HEK293 (cell line): ENCODE measurements at regions of chr18 and their contacts with region 1.

Region 1: DNA sequence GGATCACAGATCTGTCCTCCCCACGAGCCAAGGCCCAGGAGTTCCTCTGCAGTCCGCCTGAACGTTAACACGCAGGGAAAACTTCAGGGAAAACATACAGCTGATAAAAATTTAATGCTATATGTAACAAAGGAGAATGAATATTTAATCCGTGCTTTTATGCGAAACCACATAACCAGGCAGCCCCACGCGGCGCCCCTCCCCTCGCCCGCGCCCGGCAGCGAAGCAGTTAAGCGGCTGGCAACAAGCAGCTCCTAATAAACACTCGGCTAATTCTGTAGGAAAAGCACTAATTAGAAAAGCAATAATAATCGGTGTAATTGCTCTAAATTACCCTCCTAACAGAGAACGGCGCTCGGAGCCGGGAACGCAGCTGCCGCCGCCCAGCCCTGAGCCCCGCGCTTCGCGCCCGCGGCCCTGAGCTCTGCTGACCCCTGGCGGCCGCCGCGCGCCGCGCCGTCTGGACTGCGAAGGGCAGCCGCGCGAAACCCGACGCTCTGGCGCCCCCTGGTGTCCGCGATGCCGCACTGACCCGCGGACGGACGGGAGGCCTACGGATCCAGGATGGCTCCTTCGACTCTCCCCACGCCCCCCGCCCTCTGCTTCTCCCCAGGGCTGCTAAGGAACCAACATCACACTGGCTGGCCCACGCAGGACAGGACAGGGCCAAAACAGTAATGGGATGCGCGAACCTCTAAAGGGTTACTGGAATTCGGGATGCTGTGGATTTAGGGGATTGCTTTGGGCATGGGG is 181.4 kb downstream of the SMAD2 start:
- H3K4me3 ChIP-seq: peak overlapping the region; percentile 12; the same call in 1 of the 2 replicates
- H3K27ac ChIP-seq: no peak overlapping the region
- H3K4me1 ChIP-seq: no peaks in the 10 kb centered on the region
- CTCF ChIP-seq: peak; percentile 93

Region 2: DNA sequence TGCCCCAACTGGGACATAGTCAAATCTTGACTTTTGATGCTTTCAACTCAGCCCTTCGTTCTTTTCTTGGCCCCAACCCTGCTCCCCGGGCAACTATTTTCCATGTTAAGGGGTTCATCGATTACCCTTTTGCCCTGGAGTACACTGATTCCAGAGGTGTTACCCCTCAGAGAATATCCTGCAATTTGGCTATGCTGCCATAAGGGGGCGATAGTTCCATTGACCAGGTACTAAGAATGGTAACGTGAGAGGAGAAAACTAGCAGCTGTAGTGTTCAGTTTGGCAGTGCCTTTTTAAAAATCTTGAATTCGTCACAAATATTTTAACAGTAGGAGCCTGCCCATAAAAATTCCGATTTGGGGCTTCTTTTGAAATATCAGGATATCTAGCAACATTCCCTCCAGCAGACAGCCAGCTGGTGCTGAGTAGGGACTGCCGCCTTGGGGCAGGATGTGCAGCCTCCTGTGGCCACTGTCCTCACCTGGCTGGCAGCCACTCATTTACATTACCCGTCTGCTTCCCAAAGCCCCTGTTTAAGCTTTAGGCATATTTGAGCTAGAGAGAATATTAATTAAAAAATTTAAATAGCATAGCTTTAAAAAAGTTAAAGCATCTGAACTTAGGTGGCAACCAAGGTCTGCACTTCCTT is 351.2 kb before region 1 on chr18:
- CTCF ChIA-PET with region 1: interaction called, 10 read pairs
- POLR2A ChIA-PET with region 1: no interaction called
- H3K4me3 ChIP-seq: no peak overlapping the region
- H3K27ac ChIP-seq: no peak overlapping the region
- H3K4me1 ChIP-seq: no peaks in the 10 kb centered on the region
- CTCF ChIP-seq: no peak

Region 3: DNA sequence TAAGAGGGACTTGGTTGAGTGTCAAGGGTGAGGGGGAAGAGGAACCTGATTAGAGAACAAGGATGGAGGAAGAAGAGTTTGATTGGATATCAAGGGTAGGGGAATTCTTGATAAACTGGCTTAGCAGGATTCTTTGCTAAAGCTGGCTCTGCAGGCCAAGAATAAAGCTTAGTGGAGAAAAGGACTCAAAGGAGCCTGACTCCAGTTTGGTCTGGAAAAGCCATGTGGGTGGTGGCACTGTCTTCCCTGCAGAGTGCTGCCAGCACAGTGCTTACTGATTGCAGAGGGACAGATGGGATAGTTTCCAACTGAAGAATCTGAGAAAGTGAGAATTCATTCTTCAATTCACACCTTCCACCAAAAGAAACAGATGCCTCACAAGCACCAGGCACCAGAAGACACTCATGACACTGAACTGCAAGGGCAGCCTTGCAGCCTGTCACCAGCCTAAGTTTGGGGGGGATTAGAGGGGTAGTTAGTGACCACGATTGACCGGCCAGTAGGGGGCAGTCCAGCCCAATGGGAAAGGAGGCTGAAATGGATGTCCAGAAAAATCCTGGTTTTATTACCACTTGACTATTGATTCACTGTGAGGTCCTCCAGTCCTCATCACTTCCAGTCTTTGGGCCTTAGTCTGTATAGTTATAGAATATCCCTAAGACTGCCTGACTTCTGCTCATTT is 153.1 kb before region 1 on chr18:
- CTCF ChIA-PET with region 1: interaction called, 36 read pairs
- POLR2A ChIA-PET with region 1: no interaction called
- H3K4me3 ChIP-seq: no peak overlapping the region
- H3K27ac ChIP-seq: no peak overlapping the region
- H3K4me1 ChIP-seq: no peaks in the 10 kb centered on the region
- CTCF ChIP-seq: no peak

Region 4: DNA sequence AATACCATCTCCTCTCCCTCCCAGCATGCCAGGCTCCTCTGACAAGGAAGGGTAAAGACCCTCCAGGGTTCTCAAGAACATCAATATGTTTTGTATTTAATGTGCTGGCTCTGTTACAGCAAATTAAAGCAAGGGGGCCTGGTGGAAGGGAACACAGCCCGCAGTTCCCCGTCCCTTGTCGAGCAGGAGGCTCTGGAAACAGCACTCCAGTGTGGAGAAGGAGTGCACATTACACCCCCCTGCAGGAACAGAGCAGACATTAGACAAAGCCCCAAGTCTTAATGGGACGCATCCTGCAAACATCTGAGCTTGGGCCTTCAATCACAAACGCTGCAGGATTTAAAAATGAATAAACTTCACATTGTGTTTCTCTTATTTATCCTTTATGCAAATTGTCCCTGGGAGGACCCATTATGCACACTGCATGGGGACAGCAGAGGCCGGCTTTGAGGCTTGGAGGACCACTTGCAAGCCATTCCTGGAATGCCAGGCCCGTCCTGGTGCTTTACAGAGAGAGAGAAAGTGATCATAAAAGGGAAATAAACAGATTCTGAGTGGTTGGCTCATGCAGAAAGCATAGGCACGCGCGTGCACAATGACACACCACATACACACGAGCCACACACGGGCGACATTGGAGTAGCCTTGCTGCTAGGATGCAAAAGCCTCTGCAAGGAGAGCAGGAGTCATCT is 147.3 kb before region 1 on chr18:
- CTCF ChIA-PET with region 1: interaction called, 36 read pairs
- POLR2A ChIA-PET with region 1: no interaction called
- H3K4me3 ChIP-seq: no peak overlapping the region
- H3K27ac ChIP-seq: no peak overlapping the region
- H3K4me1 ChIP-seq: no peaks in the 10 kb centered on the region
- CTCF ChIP-seq: no peak

Region 5: DNA sequence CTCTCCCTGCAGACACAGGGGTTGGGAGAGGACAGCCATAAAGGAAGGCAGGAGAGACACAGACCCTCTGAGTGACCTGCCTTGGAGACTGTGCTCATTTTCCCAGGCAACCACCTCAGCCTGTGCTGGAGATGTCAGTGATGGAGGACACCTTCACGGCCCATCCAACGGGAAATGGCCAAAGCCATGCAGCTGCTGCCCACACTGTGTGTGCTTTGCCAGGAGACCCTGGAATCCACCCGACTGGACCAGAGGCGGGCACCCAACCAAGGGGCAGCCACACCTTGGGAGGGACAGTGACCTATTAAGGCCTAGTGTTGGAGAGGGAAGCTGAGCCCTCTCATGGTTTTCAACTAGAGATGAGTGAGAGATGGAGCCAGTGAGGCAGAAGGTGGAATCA is 11.1 kb before region 1 on chr18:
- CTCF ChIA-PET with region 1: interaction called, 26 read pairs
- POLR2A ChIA-PET with region 1: no interaction called
- H3K4me3 ChIP-seq: no peak overlapping the region
- H3K27ac ChIP-seq: no peak overlapping the region
- H3K4me1 ChIP-seq: no peaks in the 10 kb centered on the region
- CTCF ChIP-seq: no peak

Region 6: DNA sequence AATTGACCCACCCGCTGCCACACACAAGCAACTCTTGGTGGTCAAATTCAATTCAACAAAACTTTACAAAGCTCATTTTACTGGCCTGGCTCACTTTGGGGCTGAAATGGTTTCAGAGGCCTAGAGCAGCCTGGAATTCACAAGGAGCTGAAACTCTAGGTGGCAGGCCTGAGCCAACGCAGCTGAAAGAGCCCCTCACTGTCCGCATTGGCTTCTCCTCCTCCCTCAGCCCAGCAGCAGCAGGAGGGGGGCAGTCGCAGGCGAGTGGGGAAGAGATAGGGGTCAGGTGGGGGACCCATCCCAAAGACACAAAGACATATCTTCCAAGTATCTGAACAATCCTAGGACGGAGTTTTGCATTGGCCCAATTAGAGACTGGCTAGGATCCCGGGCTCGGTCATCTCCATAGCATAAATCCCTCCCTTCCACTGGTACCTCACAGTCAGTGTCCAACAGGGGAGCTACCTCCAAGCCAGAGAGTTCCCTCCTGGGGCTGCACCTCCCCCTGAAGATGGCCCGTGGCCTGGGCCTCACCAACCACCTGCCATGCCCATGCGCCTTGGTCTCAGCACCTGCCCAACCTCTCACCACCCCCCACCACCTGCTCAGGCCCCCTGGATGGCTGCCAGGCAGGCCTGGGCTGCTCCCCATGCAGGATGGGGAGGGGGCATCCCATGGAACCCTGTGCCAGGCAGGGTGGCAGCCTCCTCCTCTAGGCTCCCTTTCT is 546.7 kb after region 1 on chr18:
- CTCF ChIA-PET with region 1: no interaction called
- POLR2A ChIA-PET with region 1: no interaction called
- H3K4me3 ChIP-seq: no peak overlapping the region
- H3K27ac ChIP-seq: no peak overlapping the region
- H3K4me1 ChIP-seq: no peaks in the 10 kb centered on the region
- CTCF ChIP-seq: no peak